ENCODE measurements at regions of chr9 and their contacts with region 1.

Region 1: DNA sequence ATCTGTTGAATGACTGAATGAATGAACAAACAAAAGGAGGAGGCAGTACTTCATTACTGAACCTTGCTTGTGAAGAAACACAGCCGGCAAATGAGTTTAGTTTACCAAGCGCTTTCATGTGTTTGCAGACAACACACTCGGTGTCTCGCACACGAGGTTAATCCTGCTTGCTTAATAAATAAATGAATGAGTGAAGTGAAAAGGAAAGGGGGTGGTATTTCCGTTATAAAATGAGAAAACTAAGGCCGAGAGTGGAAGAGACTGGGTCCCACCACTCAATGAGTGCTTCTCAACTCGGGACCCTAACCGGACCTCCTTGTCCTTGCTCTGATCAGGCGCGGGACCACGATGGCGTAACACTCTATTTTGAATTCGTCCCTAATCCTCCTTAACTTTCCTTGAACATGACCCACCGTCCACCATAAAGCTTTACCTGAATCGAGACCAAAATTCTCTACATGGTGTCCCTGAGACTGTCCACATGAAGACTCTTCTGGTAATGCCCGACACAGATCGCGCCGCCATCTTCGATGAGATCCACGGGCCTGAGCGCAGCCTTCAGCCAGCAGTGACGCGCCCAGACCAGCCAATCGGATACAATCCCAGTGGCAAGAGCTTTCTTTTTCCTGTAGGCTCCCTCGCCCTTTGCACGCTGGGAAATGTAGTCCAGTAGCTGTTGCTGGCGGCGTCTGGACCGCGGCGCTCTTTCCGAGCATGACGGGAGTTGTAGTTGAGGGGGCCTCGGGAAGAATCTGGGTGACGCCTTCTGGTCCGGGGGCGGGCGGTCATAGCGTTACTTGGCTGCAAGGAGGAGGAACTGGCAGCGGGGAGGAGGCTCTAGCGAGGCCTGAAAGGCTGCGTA is at the starts of genes MRPL50 and ZNF189:
- DNase-seq: peak; percentile 99
- ATAC-seq: peak; percentile 97
- H3K4me3 Mint-ChIP-seq: peak within 1 kb of the TSS; percentile 99
- H3K27ac Mint-ChIP-seq: peak within 1 kb of the TSS; percentile 100
- H3K4me1 Mint-ChIP-seq: peaks cover 65% of the 10 kb centered on the region
- H3K27me3 Mint-ChIP-seq: no peaks in the 10 kb centered on the region
- CTCF ChIP-seq: no peak
- total RNA-seq, gene MRPL50: 16.3 to 16.7 TPM
- total RNA-seq, gene ZNF189: 6.7 to 8.3 TPM

Region 2: GRCh38 chr9:101387871-101388506 is 10.3 kb before region 1 on chr9:
- CTCF ChIA-PET with region 1: interaction called, 16 read pairs
- POLR2A ChIA-PET with region 1: interaction called, 3 read pairs
- intact Hi-C with region 1: no loop called
- DNase-seq: no peak
- ATAC-seq: peak; percentile 64
- H3K4me3 Mint-ChIP-seq: no peak overlapping the region
- H3K27ac Mint-ChIP-seq: peak overlapping the region; percentile 49
- H3K4me1 Mint-ChIP-seq: peaks cover 22% of the 10 kb centered on the region
- H3K27me3 Mint-ChIP-seq: no peaks in the 10 kb centered on the region
- CTCF ChIP-seq: peak; percentile 49

Region 3: GRCh38 chr9:101409079-101409477 is 10.8 kb after region 1 on chr9:
- CTCF ChIA-PET with region 1: interaction called, 5 read pairs
- POLR2A ChIA-PET with region 1: interaction called, 13 read pairs
- intact Hi-C with region 1: no loop called
- DNase-seq: peak; percentile 6
- ATAC-seq: no peak
- H3K4me3 Mint-ChIP-seq: no peak overlapping the region
- H3K27ac Mint-ChIP-seq: no peak overlapping the region
- H3K4me1 Mint-ChIP-seq: peaks cover 2% of the 10 kb centered on the region
- H3K27me3 Mint-ChIP-seq: no peaks in the 10 kb centered on the region
- CTCF ChIP-seq: no peak

Region 4: DNA sequence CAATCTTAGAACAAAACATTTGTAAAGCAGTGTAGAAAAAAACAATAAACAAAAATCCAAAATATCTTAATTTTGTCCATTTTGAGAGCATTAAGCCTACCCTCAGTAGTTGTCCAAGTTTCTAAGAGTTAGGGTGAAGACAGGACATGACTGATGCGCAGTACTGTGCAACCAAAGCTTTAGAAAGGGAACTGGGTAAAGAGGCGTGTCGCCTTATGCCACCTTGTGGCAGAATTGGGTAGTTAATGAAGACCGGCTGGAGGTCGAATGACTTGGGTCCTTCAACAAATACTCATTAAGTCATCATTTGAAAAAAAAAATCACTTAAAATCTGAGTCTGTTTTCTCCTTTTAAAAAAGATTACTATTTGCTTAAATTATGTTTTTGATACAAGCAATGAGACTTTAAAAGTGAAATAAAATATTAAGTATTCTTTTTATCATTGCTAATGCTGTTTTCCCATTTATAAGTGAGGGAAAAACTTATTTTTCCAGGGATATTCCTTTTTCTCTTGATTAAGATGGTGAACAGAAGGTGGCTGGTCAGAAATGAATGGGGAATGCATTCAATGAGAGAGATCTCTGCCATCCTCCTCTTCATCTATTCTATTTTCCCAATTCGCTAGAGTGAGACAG is 131.9 kb after region 1 on chr9:
- CTCF ChIA-PET with region 1: interaction called, 3 read pairs
- POLR2A ChIA-PET with region 1: interaction called, 9 read pairs
- intact Hi-C with region 1: loop called (anchors 5 kb)
- DNase-seq: peak; percentile 80
- ATAC-seq: peak; percentile 43
- H3K4me3 Mint-ChIP-seq: no peak overlapping the region
- H3K27ac Mint-ChIP-seq: no peak overlapping the region
- H3K4me1 Mint-ChIP-seq: peaks cover 1% of the 10 kb centered on the region
- H3K27me3 Mint-ChIP-seq: peaks cover 6% of the 10 kb centered on the region
- CTCF ChIP-seq: peak; percentile 85

Region 5: GRCh38 chr9:101711330-101711941 is 313.1 kb after region 1 on chr9:
- CTCF ChIA-PET with region 1: no interaction called
- POLR2A ChIA-PET with region 1: no interaction called
- intact Hi-C with region 1: no loop called
- DNase-seq: peak; percentile 52
- ATAC-seq: peak; percentile 55
- H3K4me3 Mint-ChIP-seq: no peak overlapping the region
- H3K27ac Mint-ChIP-seq: no peak overlapping the region
- H3K4me1 Mint-ChIP-seq: no peaks in the 10 kb centered on the region
- H3K27me3 Mint-ChIP-seq: peaks cover 18% of the 10 kb centered on the region
- CTCF ChIP-seq: peak; percentile 67